Activated CD4-positive, alpha-beta memory T cell treated with anti-CD3 and anti-CD28 coated beads for 36 hours (primary cell): ENCODE measurements at regions of chr14 and their contacts with region 1.

Region 1: DNA sequence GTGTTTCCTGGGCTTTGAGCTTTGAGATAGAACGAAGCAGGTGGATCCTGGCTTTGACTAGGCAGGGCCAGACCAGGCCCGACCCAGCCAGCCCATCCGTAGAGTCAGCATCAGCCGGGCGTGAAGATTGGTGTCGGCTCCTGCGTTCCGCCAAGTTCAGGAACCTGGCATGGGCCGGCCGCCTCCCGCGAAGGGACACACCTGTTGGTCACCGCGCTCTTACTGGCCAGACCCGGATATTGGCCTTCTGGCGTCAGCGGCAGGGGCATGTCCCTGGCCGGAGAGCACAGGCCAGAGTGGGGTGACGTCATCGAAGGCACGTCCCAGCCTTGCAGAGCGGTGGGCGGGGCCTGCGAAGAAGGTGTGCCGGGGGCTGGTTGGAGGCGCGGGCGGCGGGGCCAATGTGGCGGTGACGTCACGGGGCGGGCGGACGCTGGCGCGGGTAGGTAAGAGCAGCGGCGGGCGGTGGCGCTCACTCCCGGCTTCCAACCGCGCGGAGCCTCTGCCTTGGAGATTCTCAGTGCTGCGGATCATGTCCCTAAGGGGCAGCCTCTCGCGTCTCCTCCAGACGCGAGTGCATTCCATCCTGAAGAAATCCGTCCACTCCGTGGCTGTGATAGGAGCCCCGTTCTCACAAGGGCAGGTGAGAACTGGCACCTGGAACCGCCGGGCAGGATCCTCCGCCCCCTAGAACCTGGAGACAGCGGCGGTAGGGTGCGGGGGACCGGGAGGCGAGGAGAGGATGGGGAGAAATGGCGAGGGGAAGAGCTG is at the start of gene ARG2:
- DNase-seq: peak; percentile 98
- H3K4me3 Mint-ChIP-seq: peak within 1 kb of the TSS; percentile 84
- H3K27ac Mint-ChIP-seq: no peak within 1 kb of the TSS
- H3K4me1 Mint-ChIP-seq: peaks cover 26% of the 10 kb centered on the region
- H3K27me3 Mint-ChIP-seq: peaks cover 15% of the 10 kb centered on the region
- total RNA-seq, gene ARG2: 6.8 to 7.6 TPM

Region 2: GRCh38 chr14:67641902-67642749 is 22.5 kb after region 1 on chr14:
- CTCF ChIA-PET with region 1: interaction called, 3 read pairs
- POLR2A ChIA-PET with region 1: interaction called, 3 read pairs
- intact Hi-C with region 1: loop called (anchors 2 kb)
- DNase-seq: peak; percentile 41
- H3K4me3 Mint-ChIP-seq: no peak overlapping the region
- H3K27ac Mint-ChIP-seq: peak overlapping the region; percentile 49
- H3K4me1 Mint-ChIP-seq: peaks cover 18% of the 10 kb centered on the region
- H3K27me3 Mint-ChIP-seq: no peaks in the 10 kb centered on the region

Region 3: GRCh38 chr14:67666750-67667449 is 47.3 kb after region 1 on chr14:
- CTCF ChIA-PET with region 1: interaction called, 92 read pairs
- POLR2A ChIA-PET with region 1: no interaction called
- intact Hi-C with region 1: loop called (anchors 1 kb)
- DNase-seq: peak; percentile 20
- H3K4me3 Mint-ChIP-seq: no peak overlapping the region
- H3K27ac Mint-ChIP-seq: no peak overlapping the region
- H3K4me1 Mint-ChIP-seq: peaks cover 56% of the 10 kb centered on the region
- H3K27me3 Mint-ChIP-seq: no peaks in the 10 kb centered on the region

Region 4: GRCh38 chr14:67674481-67675169 is 55.0 kb after region 1 on chr14 and contains the start of gene VTI1B:
- CTCF ChIA-PET with region 1: interaction called, 92 read pairs
- POLR2A ChIA-PET with region 1: no interaction called
- intact Hi-C with region 1: no loop called
- DNase-seq: peak; percentile 79
- H3K4me3 Mint-ChIP-seq: peak within 1 kb of the TSS; percentile 86
- H3K27ac Mint-ChIP-seq: peak within 1 kb of the TSS; percentile 83
- H3K4me1 Mint-ChIP-seq: peaks cover 42% of the 10 kb centered on the region
- H3K27me3 Mint-ChIP-seq: no peaks in the 10 kb centered on the region
- total RNA-seq, gene VTI1B: 75.6 to 75.8 TPM

Region 5: DNA sequence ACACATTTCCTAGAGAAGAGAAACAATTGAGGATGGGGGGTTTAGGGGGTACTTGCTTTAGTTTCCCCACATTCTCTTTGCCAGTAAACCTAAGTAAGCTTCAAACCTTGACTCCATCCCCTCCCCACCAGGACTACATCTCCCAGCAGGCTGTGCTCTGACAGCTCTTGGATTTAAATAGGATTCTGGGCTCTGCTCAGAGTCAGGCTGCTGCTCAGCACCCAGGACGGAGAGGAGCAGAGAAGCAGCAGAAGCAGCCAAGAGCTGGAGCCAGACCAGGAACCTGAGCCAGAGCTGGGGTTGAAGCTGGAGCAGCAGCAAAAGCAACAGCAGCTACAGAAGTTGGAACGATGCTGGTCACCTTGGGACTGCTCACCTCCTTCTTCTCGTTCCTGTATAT is 102.7 kb after region 1 on chr14:
- CTCF ChIA-PET with region 1: no interaction called
- POLR2A ChIA-PET with region 1: no interaction called
- intact Hi-C with region 1: no loop called
- DNase-seq: no peak
- H3K4me3 Mint-ChIP-seq: no peak overlapping the region
- H3K27ac Mint-ChIP-seq: no peak overlapping the region
- H3K4me1 Mint-ChIP-seq: peaks cover 7% of the 10 kb centered on the region
- H3K27me3 Mint-ChIP-seq: peaks cover 32% of the 10 kb centered on the region

Region 6: GRCh38 chr14:67816326-67817002 is 196.8 kb after region 1 on chr14 and contains the start of gene ZFYVE26:
- CTCF ChIA-PET with region 1: no interaction called
- POLR2A ChIA-PET with region 1: no interaction called
- intact Hi-C with region 1: loop called (anchors 2 kb)
- DNase-seq: peak; percentile 95
- H3K4me3 Mint-ChIP-seq: peak within 1 kb of the TSS; percentile 93
- H3K27ac Mint-ChIP-seq: peak within 1 kb of the TSS; percentile 90
- H3K4me1 Mint-ChIP-seq: peaks cover 50% of the 10 kb centered on the region
- H3K27me3 Mint-ChIP-seq: no peaks in the 10 kb centered on the region
- total RNA-seq, gene ZFYVE26: 12.5 to 12.6 TPM